Activated CD4-positive, alpha-beta memory T cell treated with anti-CD3 and anti-CD28 coated beads for 36 hours (primary cell): ENCODE measurements at regions of chr11 and their contacts with region 1.

Region 1: DNA sequence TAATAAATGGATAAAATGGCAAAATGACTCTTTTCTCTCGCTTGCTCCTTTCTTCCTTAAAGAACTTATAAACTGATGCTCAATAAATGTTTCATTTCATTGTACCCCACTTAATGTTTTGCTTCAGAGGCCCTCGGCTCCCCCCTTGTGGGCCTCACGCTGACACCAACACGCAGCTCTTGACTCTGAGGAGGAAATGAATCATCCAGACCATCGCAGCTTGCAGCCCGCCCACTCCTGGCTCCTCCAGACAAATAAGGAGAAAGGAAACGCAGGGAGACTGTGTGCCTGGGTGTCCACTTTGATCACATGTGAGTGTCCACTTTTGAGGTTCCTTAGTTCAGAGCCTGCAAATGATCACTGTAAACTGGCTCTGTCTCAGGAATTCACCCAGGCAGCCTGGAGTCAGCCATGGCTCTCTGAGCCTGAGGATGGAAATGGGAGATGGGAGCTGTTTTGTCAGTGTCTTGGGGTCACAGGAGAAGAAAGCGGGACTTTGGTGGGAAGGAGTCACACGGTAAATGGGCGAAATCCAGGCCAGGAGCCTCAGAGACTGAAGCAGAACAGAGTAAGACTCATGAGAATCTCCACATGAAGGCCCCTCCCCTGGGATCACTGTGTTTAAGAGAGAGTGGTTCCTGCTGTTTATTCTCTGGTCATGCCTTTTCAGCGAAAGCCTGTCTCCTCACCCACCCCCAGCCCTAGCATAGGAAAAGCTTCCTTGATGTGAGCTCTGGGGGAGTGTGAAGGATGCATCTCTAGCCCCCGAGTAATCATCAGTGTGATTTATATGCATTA is 96.5 kb downstream of the CWC15 start:
- DNase-seq: peak; percentile 84
- H3K4me3 Mint-ChIP-seq: no peak overlapping the region
- H3K27ac Mint-ChIP-seq: peak overlapping the region; percentile 60
- H3K4me1 Mint-ChIP-seq: peaks cover 17% of the 10 kb centered on the region
- H3K27me3 Mint-ChIP-seq: peaks cover 10% of the 10 kb centered on the region

Region 2: DNA sequence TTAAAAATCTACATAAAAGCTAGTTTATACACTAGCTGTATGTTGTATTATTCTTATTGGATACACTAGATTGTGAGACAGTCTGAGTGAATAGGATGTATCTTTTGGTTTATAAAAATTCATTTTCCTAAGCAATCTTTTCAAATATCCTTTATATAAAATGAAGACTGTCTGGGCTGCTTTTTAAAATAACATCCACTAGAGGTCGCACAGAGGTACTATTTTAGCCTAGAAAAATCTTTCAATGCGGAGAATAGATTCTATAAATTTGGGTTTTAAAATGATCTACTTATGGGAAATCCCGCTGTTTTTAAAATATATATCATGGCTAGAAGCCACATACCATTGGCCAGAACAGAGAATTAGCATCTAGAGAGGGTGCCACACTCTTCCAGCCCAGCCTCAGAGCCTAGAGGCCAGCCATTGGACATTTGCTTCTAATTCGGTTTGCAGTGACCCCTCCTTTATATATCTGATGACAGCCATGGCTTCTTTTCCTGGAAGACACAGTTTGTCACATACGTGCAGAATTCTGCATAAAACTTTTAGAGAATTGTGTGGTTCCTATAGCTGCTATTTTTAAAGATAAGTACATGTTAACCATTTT is 357.3 kb before region 1 on chr11:
- CTCF ChIA-PET with region 1: no interaction called
- POLR2A ChIA-PET with region 1: no interaction called
- intact Hi-C with region 1: loop called (anchors 5 kb)
- DNase-seq: no peak
- H3K4me3 Mint-ChIP-seq: no peak overlapping the region
- H3K27ac Mint-ChIP-seq: no peak overlapping the region
- H3K4me1 Mint-ChIP-seq: no peaks in the 10 kb centered on the region
- H3K27me3 Mint-ChIP-seq: peaks cover 15% of the 10 kb centered on the region

Region 3: GRCh38 chr11:94543695-94544645 is 332.9 kb before region 1 on chr11 and contains the start of gene FUT4:
- CTCF ChIA-PET with region 1: no interaction called
- POLR2A ChIA-PET with region 1: no interaction called
- intact Hi-C with region 1: loop called (anchors 10 kb)
- DNase-seq: peak; percentile 83
- H3K4me3 Mint-ChIP-seq: peak within 1 kb of the TSS; percentile 99
- H3K27ac Mint-ChIP-seq: peak within 1 kb of the TSS; percentile 98
- H3K4me1 Mint-ChIP-seq: peaks cover 35% of the 10 kb centered on the region
- H3K27me3 Mint-ChIP-seq: peaks cover 2% of the 10 kb centered on the region
- total RNA-seq, gene FUT4: 3.6 to 3.9 TPM

Region 4: DNA sequence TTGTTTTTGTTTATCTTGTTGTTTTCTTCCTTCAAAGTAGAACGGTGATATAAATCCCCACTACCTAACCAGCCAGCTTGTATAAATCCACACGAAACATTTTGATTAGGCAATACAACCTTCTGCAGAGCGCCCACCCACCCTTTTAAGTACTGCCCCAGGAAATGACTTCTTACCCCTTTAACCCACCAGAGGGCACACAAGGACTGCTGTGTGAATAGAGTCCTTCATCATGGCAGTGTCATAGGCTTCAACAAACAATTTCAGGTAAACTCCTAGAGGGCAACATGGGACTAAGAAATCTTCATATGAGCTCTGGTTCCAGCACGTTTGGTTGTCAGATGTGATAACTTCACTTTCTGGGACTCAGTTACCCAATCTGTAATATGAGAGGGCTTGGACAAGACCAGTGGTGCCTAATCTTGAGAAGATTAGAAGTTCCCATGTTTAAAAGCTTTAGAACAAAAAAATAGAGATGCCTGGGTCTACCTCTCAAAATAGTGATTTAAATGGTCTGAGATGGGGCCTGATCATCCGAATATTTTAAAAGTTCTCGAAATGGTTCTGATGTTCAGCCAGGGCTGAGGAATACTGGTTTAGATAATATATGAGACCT is 253.6 kb before region 1 on chr11:
- CTCF ChIA-PET with region 1: interaction called, 4 read pairs
- POLR2A ChIA-PET with region 1: no interaction called
- intact Hi-C with region 1: loop called (anchors 1 kb)
- DNase-seq: peak; percentile 62
- H3K4me3 Mint-ChIP-seq: no peak overlapping the region
- H3K27ac Mint-ChIP-seq: no peak overlapping the region
- H3K4me1 Mint-ChIP-seq: no peaks in the 10 kb centered on the region
- H3K27me3 Mint-ChIP-seq: peaks cover 8% of the 10 kb centered on the region

Region 5: DNA sequence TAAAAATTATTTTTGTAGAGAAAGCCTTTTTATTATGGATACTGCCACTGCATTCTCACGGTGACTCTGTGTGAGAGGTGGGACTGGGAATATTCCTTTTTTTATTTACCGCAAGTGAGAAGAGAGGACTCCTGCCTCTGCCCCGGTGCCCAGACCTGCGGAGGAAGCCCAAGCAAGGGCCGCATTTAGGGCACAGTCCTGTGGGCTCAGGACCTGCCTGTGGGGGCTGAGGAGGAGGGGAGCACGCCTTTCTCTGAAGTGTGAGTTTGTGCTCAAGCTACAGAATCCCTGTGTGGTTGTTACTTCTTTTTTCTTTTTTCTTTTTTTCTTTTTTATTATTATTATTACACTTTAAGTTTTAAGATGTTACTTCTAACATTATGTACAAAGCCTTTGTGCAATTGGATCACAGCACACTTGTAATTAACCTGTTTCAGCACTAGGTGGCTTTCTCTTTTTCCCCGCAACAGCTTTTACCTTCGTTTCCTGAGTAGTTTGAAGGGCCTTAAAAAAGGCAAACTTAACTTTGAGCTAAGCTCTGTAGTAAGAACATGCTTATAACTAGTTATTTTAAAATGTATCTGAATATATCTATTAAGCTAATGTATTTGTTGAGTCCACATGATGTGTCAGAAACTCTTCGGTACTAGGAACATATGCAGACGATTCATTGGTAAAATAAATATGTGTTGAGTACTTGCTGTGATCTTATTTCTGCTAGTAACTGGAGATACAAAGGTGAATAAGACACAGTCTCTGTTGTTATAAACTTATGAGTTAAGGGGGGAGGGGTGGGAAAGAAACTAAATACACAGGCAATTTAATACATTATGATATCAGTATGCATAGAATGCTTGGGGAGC is 90.3 kb before region 1 on chr11:
- CTCF ChIA-PET with region 1: interaction called, 4 read pairs
- POLR2A ChIA-PET with region 1: no interaction called
- intact Hi-C with region 1: loop called (anchors 1 kb)
- DNase-seq: no peak
- H3K4me3 Mint-ChIP-seq: no peak overlapping the region
- H3K27ac Mint-ChIP-seq: no peak overlapping the region
- H3K4me1 Mint-ChIP-seq: no peaks in the 10 kb centered on the region
- H3K27me3 Mint-ChIP-seq: peaks cover 1% of the 10 kb centered on the region

Region 6: DNA sequence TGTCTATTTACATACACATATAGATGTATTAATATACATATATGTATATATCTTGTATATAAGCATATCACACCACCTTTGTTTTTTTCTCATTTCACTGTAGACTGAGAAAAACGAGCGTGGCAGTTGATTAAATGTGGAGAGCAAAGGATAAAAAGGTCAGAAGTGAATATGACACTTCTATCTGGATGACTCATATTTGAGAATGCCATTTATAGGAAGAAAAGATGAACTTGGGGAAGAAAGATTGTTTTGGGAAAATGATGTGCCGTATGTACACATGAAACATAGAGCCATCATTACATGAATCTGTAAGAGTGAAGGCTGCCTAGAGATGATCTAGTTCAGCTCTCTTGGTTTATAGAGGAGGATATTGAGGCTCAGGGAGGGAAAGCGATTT is 80.0 kb before region 1 on chr11:
- CTCF ChIA-PET with region 1: no interaction called
- POLR2A ChIA-PET with region 1: no interaction called
- intact Hi-C with region 1: no loop called
- DNase-seq: no peak
- H3K4me3 Mint-ChIP-seq: no peak overlapping the region
- H3K27ac Mint-ChIP-seq: no peak overlapping the region
- H3K4me1 Mint-ChIP-seq: no peaks in the 10 kb centered on the region
- H3K27me3 Mint-ChIP-seq: peaks cover under 1% of the 10 kb centered on the region

Region 7: DNA sequence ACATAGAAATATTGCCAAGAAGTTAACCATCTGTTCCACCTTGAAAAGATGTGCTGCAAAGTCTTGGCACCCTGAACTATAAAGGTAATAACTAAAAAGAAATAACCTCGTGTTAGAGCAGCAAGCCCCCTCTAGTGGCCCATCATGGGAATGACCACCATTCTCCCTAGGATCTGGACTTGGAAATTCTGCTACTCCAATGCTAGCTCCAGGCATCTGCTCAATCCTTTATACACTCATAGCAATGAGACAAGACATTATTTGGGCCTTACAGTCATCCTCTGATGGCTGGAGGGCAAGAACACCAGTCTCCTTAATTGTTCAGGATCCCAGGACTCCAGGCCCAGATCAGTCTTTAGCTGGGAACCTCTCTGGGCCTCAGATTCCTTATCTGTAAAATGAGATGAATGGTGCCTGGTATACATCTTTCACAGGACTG is 20.5 kb after region 1 on chr11:
- CTCF ChIA-PET with region 1: interaction called, 4 read pairs
- POLR2A ChIA-PET with region 1: no interaction called
- intact Hi-C with region 1: loop called (anchors 2 kb)
- DNase-seq: peak; percentile 54
- H3K4me3 Mint-ChIP-seq: no peak overlapping the region
- H3K27ac Mint-ChIP-seq: no peak overlapping the region
- H3K4me1 Mint-ChIP-seq: no peaks in the 10 kb centered on the region
- H3K27me3 Mint-ChIP-seq: no peaks in the 10 kb centered on the region

Region 8: DNA sequence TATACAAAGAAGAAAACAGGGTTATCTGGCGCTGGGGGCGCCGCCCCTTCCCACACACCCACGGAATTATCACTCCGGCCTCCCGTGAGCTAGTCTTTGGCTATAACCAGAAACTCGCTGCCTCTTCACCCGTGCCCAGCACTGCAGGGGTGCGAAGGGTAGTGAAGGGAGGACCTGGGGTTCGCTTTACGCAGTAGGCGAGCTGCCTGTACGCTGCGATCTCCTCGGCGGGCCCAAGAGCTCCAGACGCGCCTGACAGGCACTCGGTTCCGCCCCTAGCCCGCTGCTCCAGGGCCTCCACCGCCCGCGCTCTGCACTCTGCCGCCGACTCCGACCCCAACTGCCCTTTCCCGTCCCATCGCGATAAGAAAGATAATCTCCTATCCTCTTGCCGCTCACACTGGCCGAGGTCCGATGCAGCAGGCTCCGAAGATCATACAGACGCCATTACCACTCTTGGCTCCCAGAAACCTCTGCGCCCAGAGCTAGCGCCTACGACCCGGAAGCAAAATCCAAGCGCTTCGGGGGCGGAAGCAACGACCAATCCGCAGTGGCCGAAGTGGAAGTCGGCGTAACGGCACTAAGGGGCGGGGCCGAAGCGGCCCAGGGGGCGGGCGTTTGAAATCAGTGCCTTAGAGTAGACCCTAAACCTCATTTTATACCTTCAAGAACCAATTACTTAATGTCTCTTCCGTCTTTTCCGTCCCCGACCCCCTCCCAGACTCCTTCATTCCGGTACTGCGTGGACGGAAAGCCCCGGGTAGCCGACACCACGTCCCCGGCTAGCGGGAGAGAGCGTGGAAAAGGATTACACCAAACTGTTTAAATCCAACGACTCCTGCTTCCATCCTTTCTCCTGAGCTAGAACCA is 96.5 kb after region 1 on chr11 and contains the starts of genes CWC15 and KDM4D:
- CTCF ChIA-PET with region 1: no interaction called
- POLR2A ChIA-PET with region 1: no interaction called
- intact Hi-C with region 1: loop called (anchors 5 kb)
- DNase-seq: peak; percentile 97
- H3K4me3 Mint-ChIP-seq: peak within 1 kb of the TSS; percentile 99
- H3K27ac Mint-ChIP-seq: peak within 1 kb of the TSS; percentile 86
- H3K4me1 Mint-ChIP-seq: peaks cover 34% of the 10 kb centered on the region
- H3K27me3 Mint-ChIP-seq: no peaks in the 10 kb centered on the region
- total RNA-seq, gene CWC15: 65.9 to 67.1 TPM
- total RNA-seq, gene KDM4D: 1.4 to 1.6 TPM